Right cardiac atrium (tissue), 5 donors: ENCODE measurements at regions of chr4 and their contacts with region 1.

Region 1: DNA sequence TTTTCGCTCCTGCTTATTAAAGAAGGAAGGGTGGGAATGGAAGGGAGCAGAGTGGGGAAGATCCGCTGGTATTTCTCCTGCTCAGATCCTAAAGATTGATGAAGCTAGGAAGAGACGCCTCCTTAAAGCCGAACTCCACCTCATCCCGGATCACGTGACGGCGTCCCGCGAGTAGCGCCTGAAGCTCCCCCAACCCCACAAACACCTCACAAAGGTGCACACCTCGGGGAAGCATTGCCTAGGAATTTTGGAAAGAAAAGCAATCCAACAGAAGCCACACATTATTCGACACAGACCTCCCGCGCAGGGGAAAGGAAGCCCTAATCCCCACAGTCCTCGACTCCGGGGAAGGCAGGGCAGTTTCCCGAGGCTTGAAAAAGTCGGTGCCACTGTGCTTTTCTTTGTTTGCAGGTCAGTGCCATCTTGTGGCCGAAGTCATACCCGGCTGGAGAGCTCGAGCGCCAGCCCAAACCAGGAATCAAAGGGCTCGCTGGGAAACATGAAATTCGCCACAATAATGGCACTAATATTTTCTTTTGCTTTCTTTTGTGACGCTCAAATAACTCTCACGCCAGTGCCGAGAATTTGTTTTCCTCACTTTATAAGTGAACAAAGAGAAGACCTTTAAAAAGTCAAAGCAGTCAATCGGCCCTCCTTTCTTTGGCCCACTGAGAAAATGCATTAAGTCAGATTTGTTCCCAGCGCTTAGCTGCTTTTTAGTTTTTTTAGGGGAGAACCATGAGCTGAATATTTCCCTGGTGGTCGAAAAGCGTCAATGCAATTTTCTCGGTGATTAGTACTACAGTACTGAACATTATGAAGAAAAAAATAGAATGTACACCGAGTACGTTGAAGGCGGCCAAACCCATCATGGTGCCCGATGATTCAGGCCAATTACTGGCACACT is at the start of gene NPY1R:
- DNase-seq: peak; percentile 69 to 88 (median 82)
- ATAC-seq: peak; percentile 94 to 95
- H3K4me3 ChIP-seq: peak within 1 kb of the TSS; percentile 60
- H3K27ac ChIP-seq: no peak within 1 kb of the TSS
- H3K4me1 ChIP-seq: no peaks in the 10 kb centered on the region
- H3K27me3 ChIP-seq: no peaks in the 10 kb centered on the region
- total RNA-seq, gene NPY1R: 4.4 to 11.3 (median 5.8) TPM

Region 2: DNA sequence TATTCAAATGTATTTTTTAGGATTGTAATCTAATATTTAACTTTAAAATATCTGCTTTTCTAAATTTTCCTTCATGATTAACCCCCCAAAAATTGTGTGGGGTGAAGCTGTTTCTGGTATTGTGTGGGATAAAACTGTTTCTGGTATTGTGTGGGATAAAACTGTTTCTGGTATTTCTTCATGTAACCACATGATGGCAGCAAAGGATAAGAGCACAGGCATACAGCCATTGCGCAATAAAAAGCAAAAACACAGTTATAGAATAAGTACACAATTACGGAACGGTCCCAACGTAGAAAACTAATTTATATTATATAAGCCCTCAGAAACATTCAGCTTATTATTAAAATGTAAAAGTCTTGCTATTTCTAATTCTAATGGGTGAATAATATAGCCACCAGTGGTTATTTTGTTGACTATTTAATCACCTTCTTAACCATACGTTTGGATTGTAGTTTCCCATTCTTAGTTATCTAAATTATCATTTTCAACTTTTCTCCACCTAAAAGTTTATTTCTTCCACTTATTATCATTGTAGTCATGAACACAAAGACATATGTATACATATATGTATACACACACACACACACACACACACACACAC is 835.1 kb before region 1 on chr4:
- intact Hi-C with region 1: loop called in 2 of 4 experiments (anchors 5 kb)
- DNase-seq: no peak
- ATAC-seq: peak; percentile 70 to 76
- H3K4me3 ChIP-seq: no peak overlapping the region
- H3K27ac ChIP-seq: no peak overlapping the region
- H3K4me1 ChIP-seq: no peaks in the 10 kb centered on the region
- H3K27me3 ChIP-seq: no peaks in the 10 kb centered on the region

Region 3: GRCh38 chr4:162645381-162645780 is 687.4 kb before region 1 on chr4:
- intact Hi-C with region 1: loop called in 1 of 4 experiments (anchors 10 kb)
- DNase-seq: no peak
- ATAC-seq: no peak
- H3K4me3 ChIP-seq: no peak overlapping the region
- H3K27ac ChIP-seq: no peak overlapping the region
- H3K4me1 ChIP-seq: no peaks in the 10 kb centered on the region
- H3K27me3 ChIP-seq: no peaks in the 10 kb centered on the region

Region 4: GRCh38 chr4:163063891-163064290 is 268.9 kb before region 1 on chr4:
- intact Hi-C with region 1: no loop called
- DNase-seq: no peak
- ATAC-seq: no peak
- H3K4me3 ChIP-seq: no peak overlapping the region
- H3K27ac ChIP-seq: no peak overlapping the region
- H3K4me1 ChIP-seq: no peaks in the 10 kb centered on the region
- H3K27me3 ChIP-seq: no peaks in the 10 kb centered on the region

Region 5: GRCh38 chr4:163171590-163171989 is 161.2 kb before region 1 on chr4:
- intact Hi-C with region 1: no loop called
- DNase-seq: no peak
- ATAC-seq: no peak
- H3K4me3 ChIP-seq: no peak overlapping the region
- H3K27ac ChIP-seq: no peak overlapping the region
- H3K4me1 ChIP-seq: no peaks in the 10 kb centered on the region
- H3K27me3 ChIP-seq: no peaks in the 10 kb centered on the region